GM12878 (cell line): ENCODE measurements at regions of chr4 and their contacts with region 1.

Region 1: DNA sequence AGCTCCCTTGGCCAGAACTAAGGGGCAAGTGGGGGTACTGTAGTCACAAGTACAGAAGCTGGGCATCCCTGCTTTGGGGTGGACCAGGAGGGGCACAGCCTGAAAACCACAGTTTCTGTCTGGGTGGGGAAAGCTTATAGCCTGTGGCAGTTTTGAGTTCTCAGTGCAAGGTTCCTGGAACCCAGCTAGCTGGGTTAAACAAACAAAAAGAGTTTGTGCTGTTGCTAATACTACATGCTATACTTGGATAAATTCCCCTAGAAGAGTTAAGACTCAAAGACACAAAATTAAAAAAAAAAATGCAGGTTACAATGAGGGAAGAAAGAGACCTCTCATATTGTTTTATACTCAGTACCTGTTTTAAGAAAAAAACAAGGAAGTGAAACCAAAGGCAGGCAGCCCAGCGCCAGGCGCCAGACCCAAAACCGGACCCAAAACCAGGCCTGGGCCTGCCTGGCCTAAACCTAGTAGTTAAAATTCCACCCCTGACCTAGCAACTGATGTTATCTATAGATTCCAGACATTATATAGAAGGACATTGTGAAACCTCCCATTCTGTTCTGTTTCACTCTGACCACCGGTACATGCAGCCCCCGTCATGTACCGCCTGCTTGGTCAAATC is 50.8 kb downstream of the SLC2A9 start:
- DNase-seq: peak; percentile 41
- ATAC-seq: peak; percentile 90
- H3K4me3 ChIP-seq: no peak overlapping the region; the same call in 1 of the 2 replicates
- H3K27ac ChIP-seq: peak overlapping the region; percentile 87
- H3K4me1 ChIP-seq: peaks cover 20% of the 10 kb centered on the region
- H3K27me3 ChIP-seq: no peaks in the 10 kb centered on the region
- CTCF ChIP-seq: no peak
- EP300 ChIP-seq: 0 out of 4 replicates have a peak, but pooled peaks of 1 of the 2 experiments have one; percentile 16
- POLR2A ChIP-seq: no peak
- RAD21 ChIP-seq: no peak

Region 2: DNA sequence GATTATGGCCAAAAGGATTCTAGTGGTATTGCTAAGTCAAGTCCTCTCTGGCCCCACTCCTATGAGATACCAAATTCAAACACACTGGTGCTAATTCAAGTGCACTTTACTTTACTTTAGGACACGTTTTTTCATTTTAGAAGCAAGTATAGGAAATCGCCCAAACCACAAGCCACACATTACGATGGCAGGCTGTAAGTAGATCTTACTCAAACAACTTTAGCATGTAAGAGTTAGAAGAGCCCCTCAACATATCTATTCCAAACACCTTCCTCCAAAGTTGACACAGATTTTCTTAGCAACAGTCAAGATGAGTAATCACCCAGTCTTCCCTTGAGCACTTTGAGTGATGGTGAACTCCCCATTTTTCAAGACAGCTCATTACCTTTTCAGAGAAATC is 145.5 kb before region 1 on chr4:
- CTCF ChIA-PET with region 1: no interaction called
- POLR2A ChIA-PET with region 1: no interaction called
- RAD21 ChIA-PET with region 1: no interaction called
- SMC1A ChIA-PET with region 1: no interaction called
- in situ Hi-C with region 1: no loop called
- intact Hi-C with region 1: no loop called
- DNase-seq: no peak
- ATAC-seq: peak; percentile 86
- H3K4me3 ChIP-seq: no peak overlapping the region
- H3K27ac ChIP-seq: no peak overlapping the region
- H3K4me1 ChIP-seq: no peaks in the 10 kb centered on the region
- H3K27me3 ChIP-seq: no peaks in the 10 kb centered on the region; a peak in 1 of 4 replicates
- CTCF ChIP-seq: no peak
- EP300 ChIP-seq: no peak
- POLR2A ChIP-seq: no peak
- RAD21 ChIP-seq: no peak

Region 3: GRCh38 chr4:9931146-9931545 is 39.4 kb before region 1 on chr4:
- CTCF ChIA-PET with region 1: no interaction called
- POLR2A ChIA-PET with region 1: no interaction called
- RAD21 ChIA-PET with region 1: no interaction called
- SMC1A ChIA-PET with region 1: no interaction called
- in situ Hi-C with region 1: no loop called
- intact Hi-C with region 1: no loop called
- DNase-seq: no peak
- ATAC-seq: no peak
- H3K4me3 ChIP-seq: no peak overlapping the region
- H3K27ac ChIP-seq: no peak overlapping the region
- H3K4me1 ChIP-seq: no peaks in the 10 kb centered on the region
- H3K27me3 ChIP-seq: no peaks in the 10 kb centered on the region
- CTCF ChIP-seq: no peak
- EP300 ChIP-seq: no peak
- POLR2A ChIP-seq: no peak
- RAD21 ChIP-seq: no peak

Region 4: GRCh38 chr4:9999956-10000551 is 29.6 kb after region 1 on chr4:
- CTCF ChIA-PET with region 1: interaction called, 5 read pairs
- POLR2A ChIA-PET with region 1: interaction called, 39 read pairs
- RAD21 ChIA-PET with region 1: interaction called, 69 read pairs
- SMC1A ChIA-PET with region 1: interaction called, 70 read pairs
- in situ Hi-C with region 1: no loop called
- intact Hi-C with region 1: no loop called
- DNase-seq: no peak
- ATAC-seq: peak; percentile 57
- H3K4me3 ChIP-seq: no peak overlapping the region
- H3K27ac ChIP-seq: peak overlapping the region; percentile 60
- H3K4me1 ChIP-seq: peaks cover 44% of the 10 kb centered on the region
- H3K27me3 ChIP-seq: no peaks in the 10 kb centered on the region
- CTCF ChIP-seq: no peak
- EP300 ChIP-seq: no peak
- POLR2A ChIP-seq: no peak
- RAD21 ChIP-seq: no peak

Region 5: DNA sequence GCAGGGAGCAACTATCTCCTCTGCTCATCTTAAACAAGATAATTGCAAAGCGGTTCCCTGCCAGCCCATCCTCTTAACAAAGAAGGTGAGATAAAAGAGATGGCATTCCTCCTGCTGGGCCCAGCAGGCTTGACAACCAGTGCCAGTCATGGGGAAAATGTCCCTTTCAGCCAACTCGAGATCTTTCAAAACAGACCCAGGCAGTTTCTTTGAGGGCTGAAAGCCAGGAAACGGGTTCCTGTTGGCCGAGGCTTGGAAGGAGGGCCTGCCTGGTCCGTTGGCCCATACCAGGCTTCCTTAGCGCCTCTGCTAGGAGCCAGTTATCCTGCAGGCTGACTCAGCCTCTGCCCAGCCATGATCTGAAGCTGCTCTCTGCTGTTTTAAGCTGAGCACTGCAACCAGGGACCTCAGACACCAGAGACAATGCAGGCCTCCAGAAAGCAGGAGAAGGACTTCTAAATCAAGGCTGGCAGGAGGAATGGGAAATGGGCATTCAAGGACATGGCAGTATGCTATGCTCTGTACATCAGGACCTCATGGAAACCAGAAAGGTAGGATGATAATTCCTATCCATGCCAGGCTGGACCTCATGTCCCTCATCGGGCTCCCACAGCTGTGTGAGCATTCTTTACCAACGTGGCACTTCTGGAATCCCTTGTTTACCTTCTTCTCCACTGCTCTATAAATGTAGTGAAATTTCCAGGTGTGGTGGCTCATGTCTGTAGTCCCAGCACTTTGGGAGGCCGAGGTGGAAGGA is 93.2 kb after region 1 on chr4:
- CTCF ChIA-PET with region 1: no interaction called
- POLR2A ChIA-PET with region 1: no interaction called
- RAD21 ChIA-PET with region 1: no interaction called
- SMC1A ChIA-PET with region 1: no interaction called
- in situ Hi-C with region 1: no loop called
- intact Hi-C with region 1: no loop called
- DNase-seq: no peak
- ATAC-seq: peak; percentile 45; the same call in 2 of the 3 replicates
- H3K4me3 ChIP-seq: no peak overlapping the region
- H3K27ac ChIP-seq: no peak overlapping the region
- H3K4me1 ChIP-seq: no peaks in the 10 kb centered on the region
- H3K27me3 ChIP-seq: no peaks in the 10 kb centered on the region
- CTCF ChIP-seq: peak in 2 of 3 experiments; percentile 4 to 28; a peak in 2 of 6 replicates
- EP300 ChIP-seq: no peak
- POLR2A ChIP-seq: no peak
- RAD21 ChIP-seq: peak; percentile 44